SK-N-SH (cell line): ENCODE measurements at regions of chr6 and their contacts with region 1.

Region 1: DNA sequence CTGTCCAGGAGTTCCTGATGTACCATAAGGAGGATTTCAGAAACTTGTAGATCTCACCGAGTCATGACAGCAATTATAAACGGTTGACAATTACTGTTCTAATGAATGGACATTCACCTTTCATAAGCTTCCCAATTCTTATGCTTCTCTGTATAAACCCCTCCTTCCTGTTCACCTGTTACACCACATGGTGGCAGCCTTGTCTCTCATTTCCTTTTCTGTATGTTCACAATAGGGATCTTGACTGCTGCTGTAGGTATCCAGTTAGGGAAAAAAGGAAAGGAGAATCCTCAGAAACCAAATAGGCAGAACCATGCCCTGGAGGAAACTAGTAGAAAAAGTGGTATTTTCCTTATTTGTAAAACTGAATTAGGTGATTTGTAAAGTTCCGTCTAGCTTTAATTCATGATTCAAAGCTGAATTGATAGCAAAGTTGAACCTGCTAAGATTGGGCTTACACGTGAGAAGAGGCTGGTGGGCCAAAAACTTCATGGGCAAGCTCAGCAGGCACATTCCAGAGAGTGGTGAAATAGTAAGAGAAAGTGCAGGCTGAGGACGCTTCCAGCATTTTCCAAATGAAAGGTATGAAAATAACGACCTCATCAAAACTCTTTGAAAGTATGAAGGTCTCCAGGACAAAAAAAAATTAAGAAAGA is 29.0 kb upstream of the TBPL1 start:
- DNase-seq: peak; percentile 62
- H3K4me3 ChIP-seq: no peak overlapping the region; a peak in 1 of 4 replicates
- H3K27ac ChIP-seq: no peak overlapping the region
- H3K4me1 ChIP-seq: no peaks in the 10 kb centered on the region
- H3K27me3 ChIP-seq: peaks cover 17% of the 10 kb centered on the region
- CTCF ChIP-seq: peak; percentile 90
- EP300 ChIP-seq: no peak
- RAD21 ChIP-seq: peak; percentile 98

Region 2: DNA sequence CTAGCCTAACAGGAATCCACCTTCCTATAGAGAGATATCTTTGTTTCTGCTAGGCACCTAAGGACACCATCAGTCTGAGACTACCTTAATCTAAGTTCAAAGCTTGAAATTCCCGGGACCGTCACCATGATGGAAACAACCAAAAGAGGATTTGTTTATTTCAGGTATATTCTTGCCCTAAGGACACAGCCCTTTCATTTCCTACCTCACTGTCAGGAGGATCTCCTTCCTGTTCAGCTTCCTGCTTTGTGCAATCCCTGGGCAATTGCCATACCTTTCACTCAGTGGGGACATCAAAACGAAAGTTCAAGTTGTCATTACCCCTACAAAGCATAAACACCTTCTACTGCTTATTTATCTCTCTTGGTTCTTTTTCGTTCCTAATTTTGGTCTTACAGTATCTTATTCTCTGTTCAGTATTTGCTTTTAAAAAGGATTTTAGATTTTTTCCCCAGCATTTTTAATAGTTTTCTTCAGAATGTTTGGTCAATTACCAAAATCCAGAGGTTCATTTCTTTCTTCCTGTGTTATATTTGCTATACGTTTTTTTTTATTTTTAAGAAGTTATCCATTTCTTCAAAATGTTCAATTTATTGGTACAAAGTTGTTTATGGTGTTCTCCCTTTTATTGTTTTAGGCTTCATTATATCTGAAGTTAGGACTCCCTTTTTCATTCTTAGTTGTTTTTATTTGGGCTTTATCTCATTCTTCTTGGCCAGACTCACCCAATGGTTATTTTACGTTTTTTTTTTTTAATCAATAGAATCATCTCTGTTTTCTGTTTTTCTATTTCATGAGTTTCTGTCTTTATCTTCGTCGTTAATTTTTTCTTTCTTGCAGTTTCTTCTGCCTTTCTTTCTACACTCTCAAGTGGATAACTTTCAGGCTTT is 16.0 kb after region 1 on chr6:
- CTCF ChIA-PET with region 1: interaction called, 41 read pairs
- POLR2A ChIA-PET with region 1: no interaction called
- DNase-seq: no peak
- H3K4me3 ChIP-seq: no peak overlapping the region
- H3K27ac ChIP-seq: no peak overlapping the region
- H3K4me1 ChIP-seq: no peaks in the 10 kb centered on the region
- H3K27me3 ChIP-seq: peaks cover 4% of the 10 kb centered on the region; the same call in 1 of the 2 replicates
- CTCF ChIP-seq: no peak
- EP300 ChIP-seq: no peak
- RAD21 ChIP-seq: no peak

Region 3: GRCh38 chr6:133959667-133960368 is 35.8 kb after region 1 on chr6:
- CTCF ChIA-PET with region 1: interaction called, 13 read pairs
- POLR2A ChIA-PET with region 1: no interaction called
- DNase-seq: no peak
- H3K4me3 ChIP-seq: no peak overlapping the region
- H3K27ac ChIP-seq: no peak overlapping the region
- H3K4me1 ChIP-seq: peaks cover 13 to 16% of the 10 kb centered on the region in 2 experiments; a peak in 3 of 4 replicates
- H3K27me3 ChIP-seq: no peaks in the 10 kb centered on the region
- CTCF ChIP-seq: no peak
- EP300 ChIP-seq: no peak
- RAD21 ChIP-seq: no peak

Region 4: DNA sequence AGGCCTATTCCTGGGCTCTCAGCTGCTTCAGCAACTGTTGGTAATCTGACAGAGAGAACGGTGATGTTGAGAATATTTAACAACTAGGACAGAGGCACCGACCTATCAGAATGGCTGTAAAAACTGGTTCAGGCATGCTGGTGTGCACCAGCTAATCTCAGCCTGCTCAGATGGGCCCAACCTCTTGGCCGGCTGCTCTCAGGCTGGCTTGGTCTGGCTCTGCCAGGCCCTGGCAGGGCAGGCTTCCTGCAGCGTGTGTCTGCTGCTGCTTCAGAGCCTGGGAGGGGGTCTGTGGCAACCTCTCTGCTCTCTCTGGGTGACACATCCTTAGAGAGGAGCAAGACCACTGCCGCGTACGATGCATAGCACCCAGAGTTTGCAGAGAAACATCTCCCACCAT is 123.6 kb after region 1 on chr6:
- CTCF ChIA-PET with region 1: interaction called, 11 read pairs
- POLR2A ChIA-PET with region 1: no interaction called
- DNase-seq: no peak
- H3K4me3 ChIP-seq: no peak overlapping the region
- H3K27ac ChIP-seq: no peak overlapping the region; a peak in 1 of 4 replicates
- H3K4me1 ChIP-seq: no peaks in the 10 kb centered on the region; a peak in 2 of 4 replicates
- H3K27me3 ChIP-seq: no peaks in the 10 kb centered on the region
- CTCF ChIP-seq: no peak
- EP300 ChIP-seq: no peak
- RAD21 ChIP-seq: no peak

Region 5: GRCh38 chr6:134097114-134097707 is 173.1 kb after region 1 on chr6:
- CTCF ChIA-PET with region 1: interaction called, 484 read pairs
- POLR2A ChIA-PET with region 1: interaction called, 3 read pairs
- DNase-seq: peak; percentile 69
- H3K4me3 ChIP-seq: no peak overlapping the region; a peak in 1 of 4 replicates
- H3K27ac ChIP-seq: no peak overlapping the region
- H3K4me1 ChIP-seq: peaks cover 0 to 11% of the 10 kb centered on the region in 2 experiments; a peak in 2 of 4 replicates
- H3K27me3 ChIP-seq: peaks cover 10% of the 10 kb centered on the region; the same call in 1 of the 2 replicates
- CTCF ChIP-seq: peak; percentile 81
- EP300 ChIP-seq: no peak
- RAD21 ChIP-seq: peak; percentile 95

Region 6: GRCh38 chr6:134162932-134163331 is 238.9 kb after region 1 on chr6:
- CTCF ChIA-PET with region 1: no interaction called
- POLR2A ChIA-PET with region 1: no interaction called
- DNase-seq: no peak
- H3K4me3 ChIP-seq: no peak overlapping the region
- H3K27ac ChIP-seq: no peak overlapping the region
- H3K4me1 ChIP-seq: no peaks in the 10 kb centered on the region
- H3K27me3 ChIP-seq: no peaks in the 10 kb centered on the region
- CTCF ChIP-seq: no peak
- EP300 ChIP-seq: no peak
- RAD21 ChIP-seq: no peak